Activated T-helper 2 cell treated with anti-CD3 and anti-CD28 coated beads, Interferon-gamma antibody, Interleukin-2, Interleukin-4, amounts not matched to agents 10 μg/mL and 5 μg/mL and 100 μg/mL, durations not matched to agents 14 hours and 24 hours and 36 hours (primary cell): ENCODE measurements at regions of chr4 and their contacts with region 1.

Region 1: DNA sequence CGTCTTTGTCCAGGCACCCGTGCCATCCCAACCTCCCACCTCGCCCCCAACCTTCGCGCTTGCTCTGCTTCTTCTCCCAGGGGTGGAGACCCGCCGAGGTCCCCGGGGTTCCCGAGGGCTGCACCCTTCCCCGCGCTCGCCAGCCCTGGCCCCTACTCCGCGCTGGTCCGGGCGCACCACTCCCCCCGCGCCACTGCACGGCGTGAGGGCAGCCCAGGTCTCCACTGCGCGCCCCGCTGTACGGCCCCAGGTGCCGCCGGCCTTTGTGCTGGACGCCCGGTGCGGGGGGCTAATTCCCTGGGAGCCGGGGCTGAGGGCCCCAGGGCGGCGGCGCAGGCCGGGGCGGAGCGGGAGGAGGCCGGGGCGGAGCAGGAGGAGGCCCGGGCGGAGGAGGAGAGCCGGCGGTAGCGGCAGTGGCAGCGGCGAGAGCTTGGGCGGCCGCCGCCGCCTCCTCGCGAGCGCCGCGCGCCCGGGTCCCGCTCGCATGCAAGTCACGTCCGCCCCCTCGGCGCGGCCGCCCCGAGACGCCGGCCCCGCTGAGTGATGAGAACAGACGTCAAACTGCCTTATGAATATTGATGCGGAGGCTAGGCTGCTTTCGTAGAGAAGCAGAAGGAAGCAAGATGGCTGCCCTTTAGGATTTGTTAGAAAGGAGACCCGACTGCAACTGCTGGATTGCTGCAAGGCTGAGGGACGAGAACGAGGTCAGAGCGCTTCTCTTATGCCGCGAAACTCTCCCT is at the start of gene TET2:
- DNase-seq: peak; percentile 75
- H3K4me3 Mint-ChIP-seq: peak within 1 kb of the TSS; percentile 95
- H3K27ac Mint-ChIP-seq: peak within 1 kb of the TSS; percentile 98
- H3K4me1 Mint-ChIP-seq: peaks cover 33% of the 10 kb centered on the region
- H3K27me3 Mint-ChIP-seq: no peaks in the 10 kb centered on the region
- total RNA-seq, gene TET2: 31.1 and 31.2 TPM in 2 replicates

Region 2: DNA sequence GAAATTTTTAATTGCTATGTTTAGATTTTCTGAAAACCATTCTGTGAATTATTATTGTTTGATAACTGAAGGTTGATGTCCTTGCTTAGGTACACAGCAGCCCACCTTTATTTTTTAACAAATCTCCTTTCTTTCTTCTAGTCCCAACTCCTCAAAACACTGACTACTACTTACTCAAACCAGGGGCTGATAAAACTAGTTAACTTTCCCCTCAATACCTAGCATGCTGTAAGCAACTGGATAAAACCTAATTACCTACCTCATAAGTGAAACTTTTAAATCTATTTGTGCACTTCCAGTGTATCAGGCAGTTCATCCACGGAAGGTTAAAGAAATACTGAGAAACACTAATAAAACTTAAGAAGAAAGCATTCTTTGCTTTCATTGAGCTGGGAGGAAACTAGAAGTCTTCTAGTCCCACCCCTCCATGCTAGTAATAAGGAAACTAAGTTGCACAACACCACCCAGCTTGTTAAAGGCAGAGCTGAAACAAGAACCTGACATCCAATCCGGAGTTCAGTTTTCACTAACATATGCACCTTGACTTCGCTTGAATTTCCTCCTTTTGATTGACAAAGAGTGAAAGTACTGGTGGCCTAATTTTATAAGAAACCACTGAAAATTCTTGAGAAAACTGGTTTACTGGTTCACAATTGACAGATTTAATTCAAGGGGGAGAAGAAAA is 180.0 kb before region 1 on chr4:
- intact Hi-C with region 1: loop called (anchors 2 kb)
- DNase-seq: peak; percentile 43
- H3K4me3 Mint-ChIP-seq: peak overlapping the region; percentile 66
- H3K27ac Mint-ChIP-seq: peak overlapping the region; percentile 86
- H3K4me1 Mint-ChIP-seq: peaks cover 39% of the 10 kb centered on the region
- H3K27me3 Mint-ChIP-seq: peaks cover 4% of the 10 kb centered on the region

Region 3: GRCh38 chr4:105191621-105192210 is 45.3 kb after region 1 on chr4:
- intact Hi-C with region 1: loop called (anchors 1 kb)
- DNase-seq: no peak
- H3K4me3 Mint-ChIP-seq: no peak overlapping the region
- H3K27ac Mint-ChIP-seq: peak overlapping the region; percentile 56
- H3K4me1 Mint-ChIP-seq: peaks cover 51% of the 10 kb centered on the region
- H3K27me3 Mint-ChIP-seq: no peaks in the 10 kb centered on the region

Region 4: DNA sequence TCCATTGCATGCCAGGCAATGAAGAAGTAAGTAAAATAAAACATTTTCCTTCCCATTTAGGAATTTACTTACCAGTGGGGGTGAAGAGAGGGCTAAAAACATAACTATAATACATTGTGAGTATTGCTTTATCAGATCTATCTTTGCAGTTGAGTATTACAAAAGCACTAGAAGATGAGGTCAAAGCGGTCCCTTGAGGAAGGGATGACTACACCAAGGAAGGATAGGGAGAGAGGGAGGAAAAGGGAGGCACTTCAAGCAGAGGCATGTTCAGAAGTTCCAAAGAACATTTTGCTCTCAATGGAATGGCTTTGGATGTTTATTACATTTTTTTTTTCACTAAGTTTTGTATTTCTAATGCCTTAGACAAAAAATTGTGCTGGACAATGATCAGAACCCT is 128.1 kb after region 1 on chr4:
- intact Hi-C with region 1: loop called (anchors 10 kb)
- DNase-seq: no peak
- H3K4me3 Mint-ChIP-seq: no peak overlapping the region
- H3K27ac Mint-ChIP-seq: peak overlapping the region; percentile 60
- H3K4me1 Mint-ChIP-seq: peaks cover 38% of the 10 kb centered on the region
- H3K27me3 Mint-ChIP-seq: no peaks in the 10 kb centered on the region

Region 5: DNA sequence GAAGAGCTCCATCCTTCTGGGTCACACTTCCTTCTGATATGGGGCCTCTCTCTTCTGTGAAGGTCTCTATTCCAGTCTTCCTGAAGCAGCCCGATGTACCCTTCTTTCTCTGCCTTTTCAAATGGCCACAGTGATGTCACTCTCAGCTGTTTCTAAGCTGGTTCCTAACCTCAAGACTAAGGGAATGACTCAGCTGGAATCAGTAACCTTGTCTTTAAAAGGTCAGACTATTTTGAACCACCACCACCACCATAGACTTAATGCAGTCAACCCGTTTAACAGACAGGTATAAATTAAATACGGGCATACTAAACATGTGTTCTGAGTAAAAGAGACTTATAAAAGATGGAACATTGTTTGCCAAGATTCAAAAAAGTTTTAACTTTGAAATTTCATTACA is 206.4 kb after region 1 on chr4:
- intact Hi-C with region 1: loop called (anchors 5 kb)
- DNase-seq: no peak
- H3K4me3 Mint-ChIP-seq: no peak overlapping the region
- H3K27ac Mint-ChIP-seq: no peak overlapping the region
- H3K4me1 Mint-ChIP-seq: peaks cover 19% of the 10 kb centered on the region
- H3K27me3 Mint-ChIP-seq: no peaks in the 10 kb centered on the region

Region 6: DNA sequence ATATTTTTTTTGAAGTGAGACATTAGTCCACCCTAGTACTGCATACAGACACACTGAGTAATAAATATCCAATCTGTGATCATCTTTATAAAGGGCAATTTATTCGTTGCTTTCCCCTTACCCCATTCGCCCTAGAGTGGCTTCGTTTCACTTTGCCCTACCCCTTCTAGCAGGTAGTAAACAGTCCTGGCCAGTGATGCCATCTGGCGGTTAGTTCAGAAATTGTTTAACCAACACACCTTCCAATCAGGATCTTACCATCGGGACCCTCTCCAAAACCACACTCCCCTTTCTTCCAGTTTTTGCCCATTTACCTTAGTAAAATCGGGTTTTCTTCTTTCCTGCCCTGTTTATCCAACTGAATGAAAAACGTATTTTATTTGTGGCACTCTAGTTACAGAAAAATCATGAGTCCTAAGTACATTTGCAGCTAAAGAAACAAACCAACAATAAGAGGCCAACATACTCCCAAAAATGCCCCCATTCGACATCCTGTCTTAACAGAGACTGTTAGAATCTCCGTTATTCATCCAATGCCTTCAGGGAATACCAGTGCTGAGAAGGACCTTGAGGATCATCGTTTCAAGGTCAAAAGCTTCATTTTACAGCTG is 325.2 kb after region 1 on chr4:
- intact Hi-C with region 1: loop called (anchors 1 kb)
- DNase-seq: peak; percentile 57
- H3K4me3 Mint-ChIP-seq: peak overlapping the region; percentile 98
- H3K27ac Mint-ChIP-seq: peak overlapping the region; percentile 57
- H3K4me1 Mint-ChIP-seq: peaks cover 41% of the 10 kb centered on the region
- H3K27me3 Mint-ChIP-seq: peaks cover 11% of the 10 kb centered on the region

Region 7: DNA sequence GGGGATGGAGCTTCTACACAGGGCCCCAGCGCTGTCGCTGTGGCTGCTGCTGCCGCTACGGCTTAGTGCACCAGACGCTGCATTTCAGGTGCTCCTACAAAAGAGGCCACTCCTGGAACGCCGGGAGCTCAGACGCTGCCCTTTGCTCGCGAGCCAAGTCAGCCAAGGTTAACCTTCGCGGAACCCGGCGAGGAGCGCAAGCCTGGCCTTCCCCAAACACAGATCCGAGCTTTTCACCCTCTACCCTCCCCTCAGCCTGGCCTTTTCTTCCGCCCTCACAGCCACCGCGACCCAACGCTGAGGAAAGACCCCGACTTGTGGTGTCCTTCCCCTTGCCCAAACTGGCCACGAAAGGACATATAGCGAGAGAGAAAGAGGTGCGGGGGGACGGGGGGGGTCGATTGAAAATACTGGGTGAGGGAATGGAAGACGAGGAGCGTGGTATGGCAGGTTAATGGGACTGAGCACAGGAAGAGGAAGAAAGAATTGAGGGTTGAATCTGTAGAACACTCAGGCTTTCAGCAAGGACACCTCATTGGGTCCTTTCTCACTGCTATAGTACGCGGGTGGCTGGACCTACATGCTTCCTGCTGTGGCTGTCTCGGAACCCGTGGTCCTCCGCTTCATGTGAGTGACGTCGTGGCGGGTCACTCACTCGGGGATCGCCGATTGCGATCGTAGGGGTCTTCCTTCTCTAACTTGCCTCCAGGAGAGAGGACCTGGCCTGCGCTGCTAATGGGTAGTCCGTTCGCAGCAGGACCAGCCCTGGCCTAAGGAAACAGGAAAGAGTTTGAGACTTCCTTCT is 1169.7 kb after region 1 on chr4 and contains the starts of genes AIMP1 and TBCK:
- intact Hi-C with region 1: loop called (anchors 5 kb)
- DNase-seq: peak; percentile 84
- H3K4me3 Mint-ChIP-seq: no peak within 1 kb of the TSS
- H3K27ac Mint-ChIP-seq: peak within 1 kb of the TSS; percentile 91
- H3K4me1 Mint-ChIP-seq: peaks cover 23% of the 10 kb centered on the region
- H3K27me3 Mint-ChIP-seq: no peaks in the 10 kb centered on the region
- total RNA-seq, gene AIMP1: 72.1 and 72.5 TPM in 2 replicates
- total RNA-seq, gene TBCK: 28.5 and 29.8 TPM in 2 replicates